Activated CD8-positive, alpha-beta T cell treated with anti-CD3 and anti-CD28 coated beads for 36 hours (primary cell): ENCODE measurements at regions of chr19 and their contacts with region 1.

Region 1: GRCh38 chr19:35612559-35613321 is at the start of gene HAUS5:
- DNase-seq: peak; percentile 98
- ATAC-seq: peak; percentile 96
- H3K4me3 Mint-ChIP-seq: peak within 1 kb of the TSS; percentile 84
- H3K27ac Mint-ChIP-seq: peak within 1 kb of the TSS; percentile 94
- H3K4me1 Mint-ChIP-seq: peaks cover 23% of the 10 kb centered on the region
- H3K27me3 Mint-ChIP-seq: no peaks in the 10 kb centered on the region
- CTCF ChIP-seq: no peak
- total RNA-seq, gene HAUS5: 38.3 to 40.0 TPM

Region 2: DNA sequence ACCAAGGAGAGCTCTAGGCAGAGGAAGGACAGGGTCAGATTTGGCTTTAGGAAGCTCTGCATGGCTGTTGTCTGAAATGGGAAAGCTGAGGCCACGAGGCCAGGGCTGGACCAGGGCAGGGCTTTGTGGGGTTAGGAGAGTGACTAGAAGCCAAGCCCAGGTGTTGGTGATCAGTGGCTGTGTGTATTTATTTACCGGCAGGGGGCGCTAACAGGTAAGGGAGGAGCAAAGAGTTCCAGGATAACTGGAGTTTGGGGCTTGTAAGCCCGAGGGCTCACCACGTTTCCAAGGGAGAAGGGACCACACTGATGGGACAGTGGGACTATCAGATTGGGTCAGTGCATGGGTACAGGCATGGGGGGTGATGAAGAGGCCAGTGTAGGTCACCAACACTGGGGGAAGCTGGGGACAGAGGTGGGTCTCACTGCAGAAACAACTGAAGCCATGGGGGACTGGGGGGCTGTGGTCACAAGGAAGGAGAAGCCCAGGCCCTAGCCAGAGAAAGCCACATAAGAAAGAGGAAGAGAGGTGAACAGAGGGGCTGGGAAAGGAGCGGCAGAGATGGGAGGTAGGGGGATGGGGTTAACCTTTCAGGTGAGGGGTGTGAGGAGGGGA is 63.5 kb before region 1 on chr19:
- CTCF ChIA-PET with region 1: interaction called, 19 read pairs
- POLR2A ChIA-PET with region 1: interaction called, 3 read pairs
- intact Hi-C with region 1: no loop called
- DNase-seq: peak; percentile 67
- ATAC-seq: no peak
- H3K4me3 Mint-ChIP-seq: no peak overlapping the region
- H3K27ac Mint-ChIP-seq: no peak overlapping the region
- H3K4me1 Mint-ChIP-seq: peaks cover 33% of the 10 kb centered on the region
- H3K27me3 Mint-ChIP-seq: no peaks in the 10 kb centered on the region
- CTCF ChIP-seq: peak; percentile 86

Region 3: GRCh38 chr19:35623327-35624010 is 10.7 kb after region 1 on chr19:
- CTCF ChIA-PET with region 1: no interaction called
- POLR2A ChIA-PET with region 1: interaction called, 11 read pairs
- intact Hi-C with region 1: no loop called
- DNase-seq: no peak
- ATAC-seq: no peak
- H3K4me3 Mint-ChIP-seq: no peak overlapping the region
- H3K27ac Mint-ChIP-seq: no peak overlapping the region
- H3K4me1 Mint-ChIP-seq: peaks cover 4% of the 10 kb centered on the region
- H3K27me3 Mint-ChIP-seq: no peaks in the 10 kb centered on the region
- CTCF ChIP-seq: no peak

Region 4: GRCh38 chr19:35648017-35648961 is 35.5 kb after region 1 on chr19 and contains the start of gene COX6B1:
- CTCF ChIA-PET with region 1: no interaction called
- POLR2A ChIA-PET with region 1: interaction called, 13 read pairs
- intact Hi-C with region 1: no loop called
- DNase-seq: peak; percentile 97
- ATAC-seq: peak; percentile 72
- H3K4me3 Mint-ChIP-seq: peak within 1 kb of the TSS; percentile 99
- H3K27ac Mint-ChIP-seq: peak within 1 kb of the TSS; percentile 93
- H3K4me1 Mint-ChIP-seq: peaks cover 36% of the 10 kb centered on the region
- H3K27me3 Mint-ChIP-seq: no peaks in the 10 kb centered on the region
- CTCF ChIP-seq: no peak
- total RNA-seq, gene COX6B1: 432 to 437 TPM